Posterior cingulate gyrus (tissue), 11 donors: ENCODE measurements at regions of chr3 and their contacts with region 1.

Region 1: DNA sequence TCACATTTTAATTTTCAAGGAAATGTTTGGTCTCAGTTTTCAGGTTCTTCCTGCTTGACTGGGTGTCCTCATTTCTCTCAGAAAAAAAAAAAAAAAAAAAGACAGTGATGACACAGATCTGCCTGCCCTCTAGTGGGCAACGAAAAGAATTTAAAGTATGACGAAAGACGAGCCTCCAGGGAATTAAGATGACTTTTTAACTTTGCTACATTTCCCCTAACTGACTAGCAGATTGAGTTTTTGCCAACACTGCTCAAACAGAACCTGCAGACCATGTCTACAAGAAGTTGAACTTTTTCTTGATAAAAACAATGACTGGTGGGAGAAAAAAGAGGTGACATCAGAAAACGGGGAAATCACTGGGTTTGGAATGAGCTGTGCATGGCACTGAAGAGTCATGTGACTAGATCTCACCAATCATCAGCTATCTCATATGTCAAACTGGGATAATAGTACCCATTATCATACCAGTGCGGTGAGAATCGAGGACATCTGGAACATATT is 40.8 kb downstream of the EOMES start:
- DNase-seq: no peak

Region 2: DNA sequence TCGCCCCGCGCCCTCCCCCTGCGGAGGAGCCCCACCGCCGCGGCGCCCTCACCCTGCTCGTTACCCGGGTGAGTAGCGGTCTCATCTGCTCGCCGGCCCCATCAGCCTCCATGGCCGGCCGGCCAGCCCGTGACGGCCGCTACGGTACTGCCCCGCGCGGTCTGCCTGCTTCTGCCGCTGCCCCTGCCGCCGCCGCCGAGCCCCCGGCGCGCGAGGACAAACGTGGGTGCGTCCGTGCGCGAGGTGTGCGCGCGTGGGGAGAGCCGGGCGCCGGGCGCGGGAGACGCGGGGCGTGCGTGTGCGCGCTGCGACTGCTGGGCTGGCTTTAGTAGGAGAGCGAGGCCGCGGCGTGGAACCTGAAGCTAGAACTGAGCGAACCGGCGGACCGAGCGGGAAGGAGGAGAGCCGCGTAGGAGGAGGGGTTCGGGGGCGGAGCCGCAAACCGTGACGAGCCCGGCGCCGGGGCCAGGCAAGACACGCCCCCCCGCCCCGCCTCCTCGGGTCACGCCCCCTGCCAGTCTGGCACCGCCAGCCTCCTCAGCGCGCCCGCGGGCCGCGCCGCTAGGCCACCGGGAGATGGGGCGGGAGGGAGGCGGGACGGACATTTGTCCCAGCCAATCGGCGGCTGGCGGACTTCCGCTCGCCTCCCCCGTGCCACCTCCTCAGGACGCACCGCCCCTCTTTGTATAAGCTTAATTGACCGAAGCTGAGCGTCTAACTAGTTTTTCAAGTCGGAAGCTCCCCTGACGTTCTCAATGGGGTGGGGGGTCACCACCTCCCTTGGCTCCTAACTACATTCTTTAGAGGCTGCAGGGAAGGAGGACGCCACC is 197.1 kb before region 1 on chr3 and contains the start of gene SLC4A7:
- intact Hi-C with region 1: loop called (anchors 10 kb)
- DNase-seq: peak; percentile 96 to 100 (median 98)

Region 3: GRCh38 chr3:27927882-27928281 is 246.6 kb after region 1 on chr3:
- intact Hi-C with region 1: no loop called
- DNase-seq: no peak

Region 4: GRCh38 chr3:28317438-28318022 is 636.2 kb after region 1 on chr3:
- intact Hi-C with region 1: no loop called
- DNase-seq: peak in 1 of 10 donors; percentile 11